ENCODE measurements at regions of chr10 and their contacts with region 1.

Region 1: DNA sequence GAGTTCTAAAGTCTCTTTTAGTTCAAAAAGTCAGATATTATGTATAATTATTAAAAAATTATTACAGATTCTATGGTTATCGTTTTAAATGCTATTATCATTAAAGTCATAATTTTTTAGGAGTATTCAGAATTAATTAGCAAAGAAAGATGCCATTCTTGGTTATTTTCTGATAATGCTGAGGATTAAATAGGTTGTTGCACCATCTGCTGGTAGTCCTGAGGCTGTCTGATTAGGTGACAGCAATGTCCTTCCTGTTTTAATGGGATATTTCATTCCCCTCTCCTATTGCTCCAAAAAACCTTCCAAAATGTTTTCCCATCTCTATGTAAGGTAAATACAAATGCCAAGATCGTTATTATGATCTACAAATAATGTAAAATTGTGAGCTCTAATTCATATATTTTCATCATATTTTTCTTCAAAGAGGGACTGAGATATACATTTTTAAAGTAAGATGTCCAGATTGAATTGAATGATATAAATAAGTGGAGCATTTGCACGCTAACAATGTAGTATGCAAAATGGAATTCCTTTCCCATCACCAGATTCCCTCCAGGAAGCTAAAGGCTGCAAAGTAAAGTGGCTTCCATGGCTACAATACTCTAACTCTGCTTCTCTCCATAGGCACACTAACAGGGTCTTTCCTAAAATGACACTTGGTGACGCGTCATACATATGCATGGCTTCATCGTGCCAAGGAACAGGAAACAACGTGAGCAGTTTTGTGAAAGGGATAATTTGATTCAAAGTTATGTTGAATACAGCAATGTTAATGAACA is 58.8 kb upstream of the AKR1E2 start:
- DNase-seq: peak in 4 of 14 experiments; percentile 9 to 57 (median 48)
- ATAC-seq: no peak
- H3K4me3 ChIP-seq: no peak overlapping the region
- H3K4me3 Mint-ChIP-seq: no peak overlapping the region
- H3K27ac ChIP-seq: no peak overlapping the region
- H3K27ac Mint-ChIP-seq: no peak overlapping the region
- H3K4me1 ChIP-seq: no peaks in the 10 kb centered on the region
- H3K4me1 Mint-ChIP-seq: no peaks in the 10 kb centered on the region
- H3K27me3 ChIP-seq: peaks cover 7 to 16% of the 10 kb centered on the region in 2 experiments
- H3K27me3 Mint-ChIP-seq: peaks cover 17% of the 10 kb centered on the region
- CTCF ChIP-seq: peak; percentile 45

Region 2: DNA sequence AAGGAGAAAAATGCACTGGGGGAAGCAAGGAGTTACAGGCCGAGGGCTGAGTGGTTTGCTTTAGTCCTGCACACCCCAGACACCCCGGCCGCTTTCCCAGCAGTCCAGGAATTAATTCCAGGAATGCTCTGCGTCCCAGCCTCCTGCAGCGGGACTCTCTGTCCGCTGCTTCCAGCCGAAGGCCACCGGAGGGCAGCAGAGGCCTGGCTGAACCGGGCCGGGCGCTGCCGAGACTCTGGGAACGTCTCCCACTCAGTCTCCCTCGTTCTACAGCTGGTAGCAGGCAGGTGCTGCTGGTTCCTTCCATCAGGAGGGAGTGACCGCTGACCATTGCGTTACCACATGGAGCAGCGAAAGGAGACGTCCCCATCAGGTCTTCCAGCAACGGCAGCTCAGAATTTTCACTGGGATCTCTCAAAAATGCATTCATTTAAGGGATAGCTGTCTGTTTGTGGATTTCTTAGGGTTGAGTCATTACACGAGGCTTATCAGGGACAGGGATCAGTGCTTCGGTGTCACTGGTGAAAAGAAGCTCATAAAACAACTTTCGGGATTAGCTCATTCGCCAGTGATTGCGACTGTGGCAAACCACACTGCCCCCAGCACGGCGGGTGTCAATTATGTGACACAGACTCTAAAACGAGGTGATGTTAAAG is 1569.7 kb before region 1 on chr10:
- CTCF ChIA-PET with region 1: no interaction called
- POLR2A ChIA-PET with region 1: no interaction called
- intact Hi-C with region 1: loop called (anchors 2 kb)
- DNase-seq: peak; percentile 33 to 77 (median 45)
- ATAC-seq: peak; percentile 81
- H3K4me3 ChIP-seq: peak overlapping the region; percentile 37
- H3K4me3 Mint-ChIP-seq: peak overlapping the region; percentile 84
- H3K27ac ChIP-seq: no peak overlapping the region
- H3K27ac Mint-ChIP-seq: no peak overlapping the region
- H3K4me1 ChIP-seq: peaks cover 24% of the 10 kb centered on the region
- H3K4me1 Mint-ChIP-seq: peaks cover 9% of the 10 kb centered on the region
- H3K27me3 ChIP-seq: peaks cover 3 to 15% of the 10 kb centered on the region in 2 experiments
- H3K27me3 Mint-ChIP-seq: peaks cover 33% of the 10 kb centered on the region
- CTCF ChIP-seq: peak; percentile 72

Region 3: DNA sequence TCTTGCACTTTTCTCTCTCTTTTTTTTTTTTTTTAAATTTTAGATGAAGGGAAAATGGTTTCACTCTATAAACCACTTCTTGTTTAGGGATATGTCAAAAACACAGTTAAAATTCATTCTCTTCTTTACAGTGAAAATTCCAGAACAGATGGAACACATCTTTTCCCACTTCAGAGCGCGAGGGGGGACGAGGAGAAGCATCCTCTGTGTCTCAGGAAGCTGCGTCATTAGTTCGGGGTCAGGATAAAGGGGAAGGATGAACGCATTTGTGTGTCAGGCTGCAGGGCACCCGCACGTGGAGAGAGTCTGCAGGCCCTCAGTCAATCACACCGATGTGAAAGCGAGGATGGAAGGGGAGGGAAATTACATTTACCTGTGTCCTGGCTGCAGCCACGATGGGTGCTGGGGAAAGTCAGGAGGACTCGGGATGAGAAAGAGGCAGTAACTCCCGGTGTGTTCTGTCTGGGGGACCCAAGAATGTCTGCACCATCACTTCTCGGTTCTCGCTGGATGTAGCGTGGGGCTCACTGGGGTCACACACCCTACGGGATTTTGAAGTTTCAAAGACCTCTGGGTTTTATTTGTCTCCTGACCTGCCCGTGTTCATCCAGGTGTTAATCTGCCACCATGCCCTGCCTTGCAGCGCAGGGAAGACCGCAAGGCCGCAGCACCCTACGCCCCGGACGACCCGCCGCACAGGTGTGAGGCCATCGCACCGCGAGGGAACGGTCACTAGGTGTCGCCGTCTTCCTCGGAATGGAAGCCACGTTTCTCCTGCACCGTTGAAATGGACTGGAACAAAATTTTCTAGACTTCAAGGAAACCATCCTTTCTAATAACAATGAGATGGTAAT is 1527.9 kb before region 1 on chr10:
- CTCF ChIA-PET with region 1: no interaction called
- POLR2A ChIA-PET with region 1: no interaction called
- intact Hi-C with region 1: loop called in 1 of 2 experiments (anchors 1 kb)
- DNase-seq: peak; percentile 47 to 83 (median 70)
- ATAC-seq: peak; percentile 81
- H3K4me3 ChIP-seq: no peak overlapping the region
- H3K4me3 Mint-ChIP-seq: no peak overlapping the region
- H3K27ac ChIP-seq: no peak overlapping the region
- H3K27ac Mint-ChIP-seq: no peak overlapping the region
- H3K4me1 ChIP-seq: peaks cover 4% of the 10 kb centered on the region
- H3K4me1 Mint-ChIP-seq: peaks cover 5% of the 10 kb centered on the region
- H3K27me3 ChIP-seq: peaks cover 0 to 8% of the 10 kb centered on the region in 2 experiments
- H3K27me3 Mint-ChIP-seq: peaks cover 21% of the 10 kb centered on the region
- CTCF ChIP-seq: peak; percentile 94

Region 4: GRCh38 chr10:4725917-4726606 is 41.2 kb before region 1 on chr10:
- CTCF ChIA-PET with region 1: no interaction called
- POLR2A ChIA-PET with region 1: no interaction called
- intact Hi-C with region 1: no loop called
- DNase-seq: no peak
- ATAC-seq: no peak
- H3K4me3 ChIP-seq: no peak overlapping the region
- H3K4me3 Mint-ChIP-seq: no peak overlapping the region
- H3K27ac ChIP-seq: no peak overlapping the region
- H3K27ac Mint-ChIP-seq: no peak overlapping the region
- H3K4me1 ChIP-seq: no peaks in the 10 kb centered on the region
- H3K4me1 Mint-ChIP-seq: no peaks in the 10 kb centered on the region
- H3K27me3 ChIP-seq: no peaks in the 10 kb centered on the region
- H3K27me3 Mint-ChIP-seq: peaks cover 13% of the 10 kb centered on the region
- CTCF ChIP-seq: no peak

Measured in CD4-positive, alpha-beta T cell (primary cell).